Sciatic nerve (tissue), 2 donors: ENCODE measurements at regions of chr11 and their contacts with region 1.

Region 1: DNA sequence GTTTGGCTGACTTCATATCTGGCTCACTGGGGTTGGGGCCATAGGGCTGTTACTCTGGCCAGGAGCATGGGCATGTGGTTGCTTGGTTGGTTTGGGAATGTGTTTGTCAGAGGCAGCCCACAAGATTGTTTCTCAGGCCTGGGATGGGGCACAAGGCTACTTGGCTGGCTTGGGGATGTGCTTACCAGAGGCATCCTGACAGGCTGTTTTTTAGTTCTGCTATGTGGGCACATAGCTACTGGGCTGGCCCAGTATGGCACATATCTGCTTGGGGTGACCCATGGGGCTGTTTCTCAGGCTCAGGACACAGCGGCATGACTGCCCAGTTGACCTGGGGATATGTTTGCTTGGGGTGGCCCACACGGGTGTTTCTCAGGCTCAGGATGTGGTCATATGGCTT is 94.6 kb upstream of the PGR start:
- DNase-seq: no peak
- ATAC-seq: no peak

Region 2: GRCh38 chr11:102864724-102865123 is 1640.5 kb after region 1 on chr11:
- intact Hi-C with region 1: loop called (anchors 5 kb)
- DNase-seq: no peak
- ATAC-seq: peak; percentile 67

Region 3: GRCh38 chr11:103125462-103125861 is 1901.2 kb after region 1 on chr11:
- intact Hi-C with region 1: no loop called
- DNase-seq: no peak
- ATAC-seq: no peak